Activated B cell treated with CpG ODN at 0.5 μM for 24 hours (primary cell): ENCODE measurements at regions of chr1 and their contacts with region 1.

Region 1: GRCh38 chr1:206663832-206664652 is 20.7 kb upstream of the MAPKAPK2 start:
- DNase-seq: peak; percentile 49
- ATAC-seq: peak; percentile 89
- H3K4me3 Mint-ChIP-seq: peak overlapping the region; percentile 47
- H3K27ac Mint-ChIP-seq: no peak overlapping the region
- H3K4me1 Mint-ChIP-seq: peaks cover 16% of the 10 kb centered on the region
- H3K27me3 Mint-ChIP-seq: peaks cover 17% of the 10 kb centered on the region
- CTCF ChIP-seq: peak; percentile 62

Region 2: DNA sequence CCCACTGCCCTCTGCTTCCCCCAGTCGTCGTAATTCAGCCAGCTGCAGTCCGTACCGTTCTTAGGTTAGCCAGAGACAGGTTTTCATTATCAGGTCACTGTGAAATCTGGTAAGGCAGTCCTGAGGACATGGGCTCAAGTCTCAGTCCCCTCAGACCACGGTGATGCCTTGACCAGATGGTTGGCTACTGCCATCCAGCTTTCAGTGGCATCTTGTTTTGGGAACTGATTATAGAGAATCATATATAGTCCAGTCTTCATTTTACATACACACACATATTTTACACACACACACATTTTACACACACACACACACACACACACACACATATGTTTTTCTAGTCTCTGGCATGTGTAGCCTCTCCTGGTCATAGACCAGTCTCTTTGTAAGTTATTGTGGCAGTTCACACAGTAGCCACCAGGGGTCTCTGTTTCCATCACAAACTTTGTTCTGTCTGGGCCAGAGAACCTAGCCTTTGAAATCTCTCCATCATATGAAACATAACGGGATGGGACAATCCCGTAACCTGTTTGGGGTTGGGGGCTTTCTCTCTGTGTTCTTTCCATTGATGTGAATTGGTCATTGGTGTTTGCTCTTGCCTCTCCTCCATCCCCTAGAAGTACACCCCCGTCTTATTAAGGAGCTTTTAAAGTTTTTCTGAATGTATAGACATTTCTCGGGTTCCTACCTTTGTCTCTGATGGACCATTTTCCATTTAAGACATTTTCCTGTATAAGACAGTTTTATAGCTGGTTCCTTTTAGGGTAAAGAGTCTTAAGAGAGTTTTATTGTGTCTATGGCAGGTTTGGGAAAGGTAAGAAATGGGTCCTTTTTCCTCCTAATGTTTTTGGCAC is 202.2 kb before region 1 on chr1:
- CTCF ChIA-PET with region 1: interaction called, 17 read pairs
- POLR2A ChIA-PET with region 1: no interaction called
- intact Hi-C with region 1: no loop called
- DNase-seq: no peak
- ATAC-seq: peak; percentile 87
- H3K4me3 Mint-ChIP-seq: no peak overlapping the region
- H3K27ac Mint-ChIP-seq: no peak overlapping the region
- H3K4me1 Mint-ChIP-seq: peaks cover 17% of the 10 kb centered on the region
- H3K27me3 Mint-ChIP-seq: no peaks in the 10 kb centered on the region
- CTCF ChIP-seq: no peak

Region 3: GRCh38 chr1:206544562-206545257 is 119.3 kb before region 1 on chr1:
- CTCF ChIA-PET with region 1: interaction called, 11 read pairs
- POLR2A ChIA-PET with region 1: no interaction called
- intact Hi-C with region 1: loop called (anchors 1 kb)
- DNase-seq: peak; percentile 81
- ATAC-seq: peak; percentile 93
- H3K4me3 Mint-ChIP-seq: no peak overlapping the region
- H3K27ac Mint-ChIP-seq: no peak overlapping the region
- H3K4me1 Mint-ChIP-seq: peaks cover 4% of the 10 kb centered on the region
- H3K27me3 Mint-ChIP-seq: no peaks in the 10 kb centered on the region
- CTCF ChIP-seq: peak; percentile 63

Region 4: GRCh38 chr1:206593351-206593925 is 70.6 kb before region 1 on chr1:
- CTCF ChIA-PET with region 1: no interaction called
- POLR2A ChIA-PET with region 1: no interaction called
- intact Hi-C with region 1: no loop called
- DNase-seq: no peak
- ATAC-seq: no peak
- H3K4me3 Mint-ChIP-seq: no peak overlapping the region
- H3K27ac Mint-ChIP-seq: no peak overlapping the region
- H3K4me1 Mint-ChIP-seq: peaks cover 9% of the 10 kb centered on the region
- H3K27me3 Mint-ChIP-seq: no peaks in the 10 kb centered on the region
- CTCF ChIP-seq: no peak

Region 5: DNA sequence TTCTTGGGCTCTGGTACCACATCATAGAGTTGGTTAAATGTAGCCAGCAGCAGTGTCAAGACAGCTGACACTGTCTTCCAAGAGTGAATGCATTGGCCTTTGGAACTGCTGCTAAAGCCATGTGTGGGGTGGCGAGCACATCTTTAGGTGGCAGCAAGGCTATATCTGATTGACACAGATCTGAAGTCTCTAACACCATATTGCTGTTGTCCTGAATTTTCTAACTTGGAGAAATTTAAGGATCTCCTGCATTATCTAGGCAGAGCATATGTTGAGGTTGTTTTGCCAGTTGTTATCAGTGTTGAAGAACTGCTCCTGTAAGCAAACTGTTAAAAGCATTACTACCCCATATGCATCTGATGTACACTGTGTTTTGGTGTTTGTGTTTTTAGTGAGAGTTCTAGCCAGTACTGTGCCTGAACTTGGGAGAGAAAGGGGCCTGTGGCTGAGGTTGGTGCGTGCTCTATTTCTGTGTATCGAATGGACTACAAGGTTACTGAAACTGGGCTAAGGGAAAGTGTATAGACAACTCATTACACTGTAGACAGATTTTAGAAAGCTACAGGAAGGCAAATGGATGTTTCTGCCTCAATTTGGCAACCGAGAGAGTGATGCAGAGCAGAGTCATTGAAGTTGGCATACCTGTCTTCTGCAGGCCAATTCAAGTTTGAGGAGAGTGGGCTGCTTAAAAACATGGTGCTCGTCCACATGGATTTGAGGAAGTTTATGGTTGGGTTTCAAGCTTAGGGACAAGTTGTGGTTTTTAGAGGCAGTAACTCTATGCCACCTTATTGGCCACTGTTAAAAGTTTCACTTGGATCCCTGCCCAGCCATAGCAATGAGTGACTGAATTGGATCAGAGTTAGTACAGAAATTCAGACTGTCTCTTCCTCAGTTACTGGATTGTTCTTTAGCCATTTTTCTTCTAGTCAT is 11.8 kb before region 1 on chr1:
- CTCF ChIA-PET with region 1: interaction called, 19 read pairs
- POLR2A ChIA-PET with region 1: no interaction called
- intact Hi-C with region 1: no loop called
- DNase-seq: no peak
- ATAC-seq: no peak
- H3K4me3 Mint-ChIP-seq: no peak overlapping the region
- H3K27ac Mint-ChIP-seq: no peak overlapping the region
- H3K4me1 Mint-ChIP-seq: no peaks in the 10 kb centered on the region
- H3K27me3 Mint-ChIP-seq: no peaks in the 10 kb centered on the region
- CTCF ChIP-seq: no peak

Region 6: GRCh38 chr1:206691604-206692003 is 27.6 kb after region 1 on chr1:
- CTCF ChIA-PET with region 1: interaction called, 11 read pairs
- POLR2A ChIA-PET with region 1: no interaction called
- intact Hi-C with region 1: no loop called
- DNase-seq: no peak
- ATAC-seq: no peak
- H3K4me3 Mint-ChIP-seq: no peak overlapping the region
- H3K27ac Mint-ChIP-seq: no peak overlapping the region
- H3K4me1 Mint-ChIP-seq: peaks cover 85% of the 10 kb centered on the region
- H3K27me3 Mint-ChIP-seq: no peaks in the 10 kb centered on the region
- CTCF ChIP-seq: no peak

Region 7: GRCh38 chr1:206753141-206753540 is 89.1 kb after region 1 on chr1:
- CTCF ChIA-PET with region 1: no interaction called
- POLR2A ChIA-PET with region 1: no interaction called
- intact Hi-C with region 1: no loop called
- DNase-seq: no peak
- ATAC-seq: no peak
- H3K4me3 Mint-ChIP-seq: no peak overlapping the region
- H3K27ac Mint-ChIP-seq: no peak overlapping the region
- H3K4me1 Mint-ChIP-seq: peaks cover 6% of the 10 kb centered on the region
- H3K27me3 Mint-ChIP-seq: no peaks in the 10 kb centered on the region
- CTCF ChIP-seq: no peak

Region 8: DNA sequence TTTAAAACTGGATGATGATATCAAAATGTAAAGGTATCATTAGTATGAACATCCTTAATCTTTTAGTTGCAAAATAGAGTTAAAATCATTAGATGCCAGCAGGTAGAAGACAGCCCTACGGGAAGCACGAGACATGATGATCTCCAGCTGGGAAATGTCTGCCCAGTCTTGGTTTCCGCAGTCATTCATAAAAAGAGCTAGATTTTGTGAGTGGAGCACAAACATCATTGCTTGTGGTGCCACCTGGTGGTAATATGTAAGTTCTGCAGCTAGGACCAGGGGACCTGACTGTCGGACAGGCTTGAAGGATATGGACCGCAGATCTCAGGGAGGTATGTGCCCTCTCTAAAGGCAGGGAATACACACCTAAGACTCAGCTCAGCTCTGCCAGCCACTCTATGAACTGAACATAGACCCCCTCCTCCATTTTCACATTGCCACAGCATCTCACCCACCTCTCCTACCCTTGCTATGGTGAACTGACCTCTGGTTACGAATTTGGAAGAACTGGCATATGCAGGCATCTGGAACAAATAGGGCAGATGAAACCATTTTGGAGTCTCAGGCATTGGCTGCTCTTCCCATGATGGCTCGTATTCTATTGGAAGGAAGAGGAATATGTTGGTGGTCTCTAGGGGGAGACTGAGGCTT is 248.5 kb after region 1 on chr1:
- CTCF ChIA-PET with region 1: interaction called, 16 read pairs
- POLR2A ChIA-PET with region 1: no interaction called
- intact Hi-C with region 1: no loop called
- DNase-seq: no peak
- ATAC-seq: peak; percentile 54
- H3K4me3 Mint-ChIP-seq: peak overlapping the region; percentile 42
- H3K27ac Mint-ChIP-seq: no peak overlapping the region
- H3K4me1 Mint-ChIP-seq: peaks cover 93% of the 10 kb centered on the region
- H3K27me3 Mint-ChIP-seq: no peaks in the 10 kb centered on the region
- CTCF ChIP-seq: peak; percentile 72

Region 9: DNA sequence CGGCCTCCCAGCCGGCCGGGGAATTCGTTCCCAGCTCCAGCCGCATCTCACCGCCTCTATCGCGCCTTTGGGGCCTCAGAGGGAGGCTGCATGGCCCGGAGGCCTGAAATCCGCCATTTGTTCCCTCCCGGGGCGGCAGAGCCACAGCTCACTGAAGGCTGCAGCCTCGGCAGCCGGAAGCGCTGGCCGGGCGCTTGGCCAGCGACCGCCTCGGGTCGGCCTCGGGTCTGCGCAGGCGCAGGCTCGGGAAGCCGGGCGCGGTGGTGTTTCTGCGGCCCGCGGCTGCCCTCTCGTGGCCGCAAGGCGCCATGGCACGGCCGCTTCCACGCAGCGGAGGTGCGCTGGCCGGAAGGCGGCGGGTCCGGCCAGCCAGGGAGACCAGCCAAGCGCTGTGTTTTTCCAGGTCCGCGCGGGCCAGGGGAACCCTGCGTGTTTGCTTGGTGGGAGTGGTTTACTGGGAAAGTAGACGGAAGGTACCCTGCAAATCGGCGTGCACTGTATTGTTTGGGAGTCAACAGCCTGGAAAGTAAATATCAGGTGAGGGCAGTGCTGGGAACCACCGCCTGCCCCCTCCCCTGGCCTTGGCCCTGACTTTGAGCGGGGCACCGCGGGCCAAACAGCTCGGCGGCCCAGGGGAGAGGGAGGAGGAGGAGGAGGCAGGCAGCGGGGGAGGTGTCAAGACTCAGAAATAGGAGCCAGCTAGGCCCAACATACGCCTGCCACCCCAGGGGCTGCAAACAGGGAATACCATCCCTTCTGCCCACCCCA is 1299.6 kb after region 1 on chr1:
- CTCF ChIA-PET with region 1: no interaction called
- POLR2A ChIA-PET with region 1: no interaction called
- intact Hi-C with region 1: no loop called
- DNase-seq: peak; percentile 89
- ATAC-seq: peak; percentile 95
- H3K4me3 Mint-ChIP-seq: peak overlapping the region; percentile 87
- H3K27ac Mint-ChIP-seq: no peak overlapping the region
- H3K4me1 Mint-ChIP-seq: peaks cover 17% of the 10 kb centered on the region
- H3K27me3 Mint-ChIP-seq: peaks cover 28% of the 10 kb centered on the region
- CTCF ChIP-seq: peak; percentile 54